ENCODE measurements at regions of chr9 and their contacts with region 1.

Region 1: DNA sequence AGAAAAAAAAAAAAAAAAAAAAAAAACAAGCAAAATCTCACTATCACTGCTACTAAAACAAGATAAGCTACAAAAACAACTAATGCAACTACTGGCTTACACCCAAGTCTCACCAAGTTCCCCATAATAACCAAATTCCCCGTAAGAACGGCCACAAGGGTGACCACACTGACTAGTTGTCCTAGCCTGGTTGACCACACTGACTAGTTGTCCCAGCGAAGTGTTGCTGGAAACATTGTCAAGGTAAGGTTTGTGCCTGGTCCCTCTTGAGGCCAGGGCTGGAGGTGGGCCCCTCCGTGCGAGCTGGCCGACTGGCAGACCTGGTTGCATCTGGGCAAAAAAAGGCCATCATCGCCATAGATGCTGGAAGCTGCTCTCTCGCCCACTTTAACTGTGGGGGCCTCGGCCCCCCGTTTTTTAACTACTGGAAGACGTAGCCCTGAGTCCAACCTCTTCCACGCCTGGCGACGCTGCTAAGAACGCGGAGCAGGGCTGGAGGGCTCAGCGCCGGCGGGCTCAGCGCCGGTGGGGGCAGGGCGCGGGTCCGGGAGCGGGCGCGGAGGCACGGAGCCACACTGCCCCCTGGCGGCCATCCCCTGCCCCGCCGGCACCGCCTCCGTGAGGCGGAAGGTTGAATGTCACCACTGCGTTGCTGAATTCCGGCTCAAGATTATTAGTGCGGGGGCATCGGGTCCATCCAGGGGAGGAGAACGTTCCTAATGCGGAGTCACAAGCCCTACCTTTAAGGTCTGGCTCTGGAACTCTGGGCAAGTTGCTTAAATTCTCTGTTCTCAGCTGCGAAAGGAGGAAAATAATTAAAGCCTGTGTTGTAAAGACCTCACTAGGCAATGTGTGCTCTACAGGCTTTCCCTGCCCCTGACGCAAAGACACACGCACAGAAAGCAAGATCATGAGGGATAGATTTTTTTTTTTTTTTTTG is 84.0 kb downstream of the HSD17B3 start:
- DNase-seq: peak; percentile 71
- H3K4me3 ChIP-seq: peak overlapping the region in 2 of 3 experiments; percentile 29 to 41
- H3K27ac ChIP-seq: no peak overlapping the region
- H3K4me1 ChIP-seq: peaks cover 7% of the 10 kb centered on the region
- H3K27me3 ChIP-seq: peaks cover 13 to 18% of the 10 kb centered on the region in 2 experiments
- CTCF ChIP-seq: peak; percentile 90 to 99
- POLR2A ChIP-seq: no peak

Region 2: DNA sequence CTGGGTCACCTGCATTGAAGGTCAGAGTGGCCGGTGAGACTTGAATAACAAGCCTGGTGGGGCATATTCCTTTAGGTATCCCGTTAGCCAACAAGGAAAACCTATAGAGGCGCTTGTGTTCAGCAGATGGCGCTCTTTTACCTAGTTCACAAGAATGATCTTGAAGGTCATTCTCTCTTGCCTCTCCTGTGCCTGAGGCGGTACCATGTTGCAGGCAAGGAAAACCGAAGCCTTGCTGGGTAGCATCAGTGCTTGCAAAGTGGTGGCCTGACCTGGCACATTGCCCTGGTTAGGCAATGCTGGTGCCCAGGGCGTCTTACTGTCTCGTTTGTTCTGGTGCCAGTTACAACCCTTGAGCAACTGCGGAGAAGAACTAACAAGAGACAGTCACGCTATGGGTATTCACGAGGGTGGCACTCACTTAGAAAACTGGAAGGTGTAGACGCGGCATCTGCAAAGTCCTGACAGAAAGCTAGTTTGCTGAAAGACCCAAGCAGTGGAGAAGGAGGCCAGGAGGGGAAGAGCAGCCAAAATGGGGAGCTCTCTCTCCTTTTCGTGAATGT is 1434.8 kb before region 1 on chr9:
- CTCF ChIA-PET with region 1: interaction called, 4 read pairs
- POLR2A ChIA-PET with region 1: no interaction called
- dilution Hi-C with region 1: no loop called
- intact Hi-C with region 1: loop called (anchors 2 kb)
- DNase-seq: peak; percentile 81
- H3K4me3 ChIP-seq: no peak overlapping the region
- H3K27ac ChIP-seq: no peak overlapping the region
- H3K4me1 ChIP-seq: no peaks in the 10 kb centered on the region
- H3K27me3 ChIP-seq: no peaks in the 10 kb centered on the region
- CTCF ChIP-seq: peak; percentile 64 to 65
- POLR2A ChIP-seq: no peak

Region 3: GRCh38 chr9:95317119-95317892 is 900.7 kb before region 1 on chr9 and contains the start of gene FANCC:
- CTCF ChIA-PET with region 1: no interaction called
- POLR2A ChIA-PET with region 1: no interaction called
- dilution Hi-C with region 1: no loop called
- intact Hi-C with region 1: loop called (anchors 1 kb)
- DNase-seq: peak; percentile 89
- H3K4me3 ChIP-seq: peak within 1 kb of the TSS; percentile 76 to 96 (median 88)
- H3K27ac ChIP-seq: peak within 1 kb of the TSS; percentile 98
- H3K4me1 ChIP-seq: peaks cover 14% of the 10 kb centered on the region
- H3K27me3 ChIP-seq: peaks cover 0 to 5% of the 10 kb centered on the region in 2 experiments
- CTCF ChIP-seq: no peak
- POLR2A ChIP-seq: peak; percentile 72
- total RNA-seq, gene FANCC: 13.1 and 14.0 TPM in 2 replicates

Region 4: GRCh38 chr9:95574176-95574575 is 643.8 kb before region 1 on chr9:
- CTCF ChIA-PET with region 1: no interaction called
- POLR2A ChIA-PET with region 1: no interaction called
- dilution Hi-C with region 1: no loop called
- intact Hi-C with region 1: loop called (anchors 2 kb)
- DNase-seq: no peak
- H3K4me3 ChIP-seq: no peak overlapping the region
- H3K27ac ChIP-seq: no peak overlapping the region
- H3K4me1 ChIP-seq: peaks cover 14% of the 10 kb centered on the region
- H3K27me3 ChIP-seq: peaks cover 2 to 5% of the 10 kb centered on the region in 2 experiments
- CTCF ChIP-seq: no peak
- POLR2A ChIP-seq: no peak

Region 5: DNA sequence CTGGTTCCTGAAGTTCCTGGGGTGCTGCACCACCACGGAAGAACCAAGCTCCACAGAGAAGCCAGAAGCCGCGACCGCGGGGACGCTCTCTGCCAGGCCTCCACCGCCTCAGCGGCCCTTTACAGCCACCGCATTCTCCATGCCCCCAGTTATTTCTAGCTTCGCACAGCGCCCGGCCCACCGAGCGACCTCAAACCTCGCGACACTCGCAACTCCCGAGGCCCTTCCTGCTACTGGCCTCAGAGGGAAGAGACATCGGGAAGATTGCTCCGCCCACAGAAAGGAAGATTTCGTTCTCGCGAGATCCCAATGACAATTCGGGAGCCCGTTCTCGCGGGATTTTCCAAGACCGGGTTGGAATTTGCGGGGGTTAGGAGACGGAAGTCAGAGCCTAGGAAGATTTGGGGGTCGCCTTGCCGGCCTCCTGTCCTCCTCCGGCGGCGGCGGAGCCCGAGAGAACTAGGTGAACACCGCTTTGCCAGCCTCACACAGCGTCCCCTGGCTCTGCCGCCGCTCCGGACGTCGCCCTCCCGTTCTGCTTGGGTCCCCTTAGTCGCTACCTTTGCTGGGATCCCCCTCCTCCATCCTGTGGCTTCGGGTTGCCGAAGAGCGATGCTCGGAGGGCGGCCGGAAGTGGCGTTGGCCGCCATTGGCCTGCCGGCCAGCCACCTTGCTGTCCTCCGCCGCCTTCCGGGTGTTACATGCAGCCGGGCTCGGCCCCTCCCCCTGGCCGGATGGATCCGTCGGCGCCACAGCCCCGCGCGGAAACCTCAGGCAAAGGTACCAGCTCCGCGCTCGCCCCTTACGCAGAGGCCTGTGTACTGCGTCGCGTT is 342.5 kb before region 1 on chr9 and contains the start of gene ERCC6L2:
- CTCF ChIA-PET with region 1: no interaction called
- POLR2A ChIA-PET with region 1: no interaction called
- dilution Hi-C with region 1: no loop called
- intact Hi-C with region 1: loop called (anchors 2 kb)
- DNase-seq: peak; percentile 99
- H3K4me3 ChIP-seq: peak within 1 kb of the TSS in 1 of 3 experiments; percentile 71
- H3K27ac ChIP-seq: no peak within 1 kb of the TSS
- H3K4me1 ChIP-seq: peaks cover 23% of the 10 kb centered on the region
- H3K27me3 ChIP-seq: no peaks in the 10 kb centered on the region
- CTCF ChIP-seq: peak in 1 of 2 donors; percentile 0
- POLR2A ChIP-seq: peak; percentile 86
- total RNA-seq, gene ERCC6L2: 29.6 and 31.8 TPM in 2 replicates

Region 6: GRCh38 chr9:96129702-96130101 is 88.3 kb before region 1 on chr9:
- CTCF ChIA-PET with region 1: interaction called, 4 read pairs
- POLR2A ChIA-PET with region 1: no interaction called
- dilution Hi-C with region 1: no loop called
- intact Hi-C with region 1: loop called (anchors 2 kb)
- DNase-seq: peak; percentile 86
- H3K4me3 ChIP-seq: peak overlapping the region in 1 of 3 experiments; percentile 35
- H3K27ac ChIP-seq: peak overlapping the region; percentile 77
- H3K4me1 ChIP-seq: peaks cover 33% of the 10 kb centered on the region
- H3K27me3 ChIP-seq: no peaks in the 10 kb centered on the region
- CTCF ChIP-seq: no peak
- POLR2A ChIP-seq: no peak

Region 7: GRCh38 chr9:96245399-96245798 is 27.4 kb after region 1 on chr9:
- CTCF ChIA-PET with region 1: no interaction called
- POLR2A ChIA-PET with region 1: no interaction called
- dilution Hi-C with region 1: no loop called
- intact Hi-C with region 1: no loop called
- DNase-seq: no peak
- H3K4me3 ChIP-seq: no peak overlapping the region
- H3K27ac ChIP-seq: no peak overlapping the region
- H3K4me1 ChIP-seq: no peaks in the 10 kb centered on the region
- H3K27me3 ChIP-seq: peaks cover 2 to 3% of the 10 kb centered on the region in 2 experiments
- CTCF ChIP-seq: peak in 1 of 2 donors; percentile 11
- POLR2A ChIP-seq: no peak